ENCODE measurements at regions of chr11 and their contacts with region 1.

Region 1: GRCh38 chr11:114262681-114263512 is 33.3 kb upstream of the NNMT start:
- DNase-seq: peak; percentile 80
- H3K4me3 ChIP-seq: no peak overlapping the region
- H3K27ac ChIP-seq: no peak overlapping the region
- H3K4me1 ChIP-seq: peaks cover 23% of the 10 kb centered on the region
- H3K27me3 ChIP-seq: no peaks in the 10 kb centered on the region
- CTCF ChIP-seq: peak; percentile 83

Region 2: DNA sequence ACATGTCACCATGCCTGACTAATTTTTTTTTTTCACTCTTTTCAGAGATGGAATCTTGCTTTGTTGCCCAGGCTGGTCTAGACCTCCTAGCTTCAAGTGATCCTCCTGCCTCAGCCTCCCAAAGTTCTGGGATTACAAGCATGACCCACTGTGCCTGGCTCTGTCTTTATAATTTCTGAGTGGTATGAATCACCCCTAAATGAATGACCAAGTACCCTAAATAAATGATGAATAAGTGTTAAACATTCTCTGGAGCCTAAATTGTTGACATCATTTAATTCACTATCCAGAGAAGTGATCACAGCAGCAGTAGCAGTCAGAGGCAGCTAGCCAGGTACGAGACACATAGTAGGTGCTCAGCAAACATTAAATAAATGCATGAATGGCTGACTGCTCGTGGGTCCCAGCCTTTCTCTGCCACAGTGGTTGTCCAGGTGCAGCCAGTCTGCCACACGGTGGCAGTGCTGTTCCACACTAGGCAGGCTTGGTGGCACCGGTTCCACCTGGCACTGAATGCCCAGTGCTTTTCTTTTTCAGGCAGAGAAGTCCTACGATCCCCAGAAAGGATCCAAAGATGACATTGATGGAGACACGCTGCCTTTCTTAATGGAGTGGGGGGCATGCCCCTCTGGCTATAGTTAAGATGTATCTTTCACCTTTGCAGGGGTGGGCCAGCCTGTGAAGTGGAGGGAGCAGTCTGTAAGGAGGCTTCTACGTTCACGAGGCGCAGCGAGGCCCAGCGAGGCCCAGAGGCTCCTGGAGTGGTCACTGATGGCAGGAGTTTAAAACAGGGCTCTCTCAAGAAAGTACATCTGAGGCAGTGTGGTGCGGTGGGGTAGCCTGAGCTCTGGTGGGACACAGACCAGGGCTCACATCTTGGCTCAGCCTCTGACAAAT is 957.2 kb before region 1 on chr11:
- CTCF ChIA-PET with region 1: no interaction called
- POLR2A ChIA-PET with region 1: no interaction called
- intact Hi-C with region 1: loop called (anchors 2 kb)
- DNase-seq: peak; percentile 82
- H3K4me3 ChIP-seq: no peak overlapping the region
- H3K27ac ChIP-seq: no peak overlapping the region
- H3K4me1 ChIP-seq: no peaks in the 10 kb centered on the region
- H3K27me3 ChIP-seq: no peaks in the 10 kb centered on the region
- CTCF ChIP-seq: peak; percentile 99

Region 3: GRCh38 chr11:113806406-113806805 is 456.5 kb before region 1 on chr11:
- CTCF ChIA-PET with region 1: interaction called, 10 read pairs
- POLR2A ChIA-PET with region 1: no interaction called
- intact Hi-C with region 1: loop called (anchors 5 kb)
- DNase-seq: peak; percentile 29
- H3K4me3 ChIP-seq: no peak overlapping the region
- H3K27ac ChIP-seq: no peak overlapping the region
- H3K4me1 ChIP-seq: no peaks in the 10 kb centered on the region
- H3K27me3 ChIP-seq: no peaks in the 10 kb centered on the region
- CTCF ChIP-seq: peak; percentile 71

Region 4: DNA sequence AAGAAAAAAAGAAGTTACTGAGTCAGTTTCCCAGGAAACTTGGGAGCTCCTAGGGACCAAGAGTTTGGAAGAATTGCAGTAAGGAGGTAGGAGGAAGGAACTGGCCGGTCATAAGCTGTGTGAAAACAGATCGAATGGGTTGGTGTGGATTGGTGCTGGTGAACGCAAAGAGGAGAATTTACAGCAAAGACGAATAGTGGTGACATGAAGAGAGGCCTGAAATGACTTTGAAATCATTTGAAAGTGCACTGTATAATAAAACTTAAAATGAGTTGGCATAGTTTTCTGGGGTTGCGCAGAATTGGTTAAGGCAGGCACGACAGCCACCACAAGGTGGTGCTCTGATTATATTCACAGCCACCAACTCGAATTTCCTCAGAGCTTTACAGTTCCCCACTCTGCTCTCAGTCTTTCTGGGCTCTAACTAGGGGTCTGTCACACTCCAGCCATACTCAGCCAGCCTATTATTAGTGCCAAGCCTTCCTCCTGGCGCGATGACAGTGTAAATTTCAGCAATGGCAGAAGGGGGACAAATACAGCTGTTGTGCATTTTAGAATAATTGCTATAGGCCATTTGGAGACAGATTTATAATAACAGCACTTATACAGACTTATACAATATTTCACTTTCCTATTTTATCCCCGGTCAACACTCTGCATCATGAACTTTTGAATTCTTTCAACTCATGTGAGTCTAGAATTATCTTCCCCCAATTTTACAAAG is 366.6 kb before region 1 on chr11:
- CTCF ChIA-PET with region 1: interaction called, 80 read pairs
- POLR2A ChIA-PET with region 1: no interaction called
- intact Hi-C with region 1: loop called (anchors 1 kb)
- DNase-seq: peak; percentile 67
- H3K4me3 ChIP-seq: no peak overlapping the region
- H3K27ac ChIP-seq: no peak overlapping the region
- H3K4me1 ChIP-seq: no peaks in the 10 kb centered on the region
- H3K27me3 ChIP-seq: no peaks in the 10 kb centered on the region
- CTCF ChIP-seq: peak; percentile 90

Region 5: GRCh38 chr11:113994077-113994954 is 268.6 kb before region 1 on chr11:
- CTCF ChIA-PET with region 1: interaction called, 71 read pairs
- POLR2A ChIA-PET with region 1: no interaction called
- intact Hi-C with region 1: loop called (anchors 1 kb)
- DNase-seq: peak; percentile 45
- H3K4me3 ChIP-seq: no peak overlapping the region
- H3K27ac ChIP-seq: no peak overlapping the region
- H3K4me1 ChIP-seq: peaks cover 16% of the 10 kb centered on the region
- H3K27me3 ChIP-seq: peaks cover 2% of the 10 kb centered on the region
- CTCF ChIP-seq: peak; percentile 93

Region 6: GRCh38 chr11:114036156-114036811 is 226.6 kb before region 1 on chr11:
- CTCF ChIA-PET with region 1: interaction called, 3 read pairs
- POLR2A ChIA-PET with region 1: no interaction called
- intact Hi-C with region 1: loop called (anchors 1 kb)
- DNase-seq: peak; percentile 66
- H3K4me3 ChIP-seq: peak overlapping the region; percentile 38
- H3K27ac ChIP-seq: no peak overlapping the region
- H3K4me1 ChIP-seq: peaks cover 11% of the 10 kb centered on the region
- H3K27me3 ChIP-seq: no peaks in the 10 kb centered on the region
- CTCF ChIP-seq: peak; percentile 89